SK-N-SH (cell line): ENCODE measurements at regions of chr10 and their contacts with region 1.

Region 1: GRCh38 chr10:92087750-92088395 is 164.3 kb downstream of the BTAF1 start:
- DNase-seq: peak; percentile 76
- H3K4me3 ChIP-seq: no peak overlapping the region; a peak in 1 of 4 replicates
- H3K27ac ChIP-seq: peak overlapping the region; percentile 40 to 43; a peak in 2 of 4 replicates
- H3K4me1 ChIP-seq: peaks cover 0 to 2% of the 10 kb centered on the region in 2 experiments; a peak in 2 of 4 replicates
- H3K27me3 ChIP-seq: no peaks in the 10 kb centered on the region
- CTCF ChIP-seq: peak; percentile 88
- EP300 ChIP-seq: no peak; a peak in 1 of 4 replicates
- RAD21 ChIP-seq: peak; percentile 99

Region 2: GRCh38 chr10:92164036-92164696 is 76.3 kb after region 1 on chr10:
- CTCF ChIA-PET with region 1: no interaction called
- POLR2A ChIA-PET with region 1: no interaction called
- DNase-seq: no peak
- H3K4me3 ChIP-seq: no peak overlapping the region
- H3K27ac ChIP-seq: no peak overlapping the region
- H3K4me1 ChIP-seq: no peaks in the 10 kb centered on the region
- H3K27me3 ChIP-seq: no peaks in the 10 kb centered on the region
- CTCF ChIP-seq: no peak
- EP300 ChIP-seq: no peak
- RAD21 ChIP-seq: no peak

Region 3: DNA sequence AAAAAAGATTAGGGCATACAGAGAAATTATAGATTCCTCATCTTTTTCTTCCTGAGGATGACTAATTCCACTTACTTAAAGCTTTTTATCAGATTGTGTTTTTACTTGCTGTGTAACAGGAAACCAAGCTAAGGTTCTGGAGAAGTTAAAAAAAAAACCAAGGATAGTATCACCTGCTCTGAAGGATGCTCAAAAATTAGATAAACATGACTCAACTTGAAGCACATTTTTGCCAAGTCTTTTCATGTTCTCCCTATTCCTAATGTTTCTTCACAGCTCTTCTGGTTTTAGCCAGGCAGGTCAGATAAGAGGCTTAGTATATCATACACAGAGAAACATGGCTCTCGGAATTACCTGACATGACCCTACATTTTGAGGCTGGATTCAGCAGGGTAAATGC is 112.7 kb after region 1 on chr10:
- CTCF ChIA-PET with region 1: no interaction called
- POLR2A ChIA-PET with region 1: no interaction called
- DNase-seq: no peak
- H3K4me3 ChIP-seq: no peak overlapping the region
- H3K27ac ChIP-seq: peak overlapping the region in 1 of 2 experiments; percentile 12; a peak in 1 of 4 replicates
- H3K4me1 ChIP-seq: no peaks in the 10 kb centered on the region
- H3K27me3 ChIP-seq: no peaks in the 10 kb centered on the region
- CTCF ChIP-seq: no peak
- EP300 ChIP-seq: 0 out of 4 replicates have a peak, but pooled peaks of 1 of the 2 experiments have one; percentile 25
- RAD21 ChIP-seq: no peak

Region 4: DNA sequence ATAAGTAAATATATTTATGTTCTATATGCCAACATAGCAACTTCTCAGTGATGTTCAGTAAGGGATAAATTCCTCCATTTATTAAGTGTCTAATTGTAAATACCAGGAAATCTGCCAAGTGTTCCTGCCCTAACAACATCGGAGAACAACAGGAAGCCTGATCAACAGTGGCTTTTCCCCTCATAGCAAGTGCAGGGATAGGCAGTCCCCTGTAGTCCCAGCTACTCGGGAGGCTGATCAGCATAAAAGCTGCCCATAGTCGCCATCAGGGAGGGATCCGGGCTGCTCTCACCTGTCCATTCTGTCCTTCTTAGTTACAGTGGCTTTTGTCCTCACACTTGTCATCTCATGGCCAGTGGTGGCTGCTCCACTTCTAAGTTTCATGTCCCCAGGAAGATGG is 344.7 kb after region 1 on chr10:
- CTCF ChIA-PET with region 1: interaction called, 32 read pairs
- POLR2A ChIA-PET with region 1: no interaction called
- DNase-seq: no peak
- H3K4me3 ChIP-seq: no peak overlapping the region
- H3K27ac ChIP-seq: no peak overlapping the region
- H3K4me1 ChIP-seq: no peaks in the 10 kb centered on the region
- H3K27me3 ChIP-seq: no peaks in the 10 kb centered on the region
- CTCF ChIP-seq: no peak
- EP300 ChIP-seq: no peak
- RAD21 ChIP-seq: no peak